Posterior vena cava (tissue), 2 donors: ENCODE measurements at regions of chr3 and their contacts with region 1.

Region 1: DNA sequence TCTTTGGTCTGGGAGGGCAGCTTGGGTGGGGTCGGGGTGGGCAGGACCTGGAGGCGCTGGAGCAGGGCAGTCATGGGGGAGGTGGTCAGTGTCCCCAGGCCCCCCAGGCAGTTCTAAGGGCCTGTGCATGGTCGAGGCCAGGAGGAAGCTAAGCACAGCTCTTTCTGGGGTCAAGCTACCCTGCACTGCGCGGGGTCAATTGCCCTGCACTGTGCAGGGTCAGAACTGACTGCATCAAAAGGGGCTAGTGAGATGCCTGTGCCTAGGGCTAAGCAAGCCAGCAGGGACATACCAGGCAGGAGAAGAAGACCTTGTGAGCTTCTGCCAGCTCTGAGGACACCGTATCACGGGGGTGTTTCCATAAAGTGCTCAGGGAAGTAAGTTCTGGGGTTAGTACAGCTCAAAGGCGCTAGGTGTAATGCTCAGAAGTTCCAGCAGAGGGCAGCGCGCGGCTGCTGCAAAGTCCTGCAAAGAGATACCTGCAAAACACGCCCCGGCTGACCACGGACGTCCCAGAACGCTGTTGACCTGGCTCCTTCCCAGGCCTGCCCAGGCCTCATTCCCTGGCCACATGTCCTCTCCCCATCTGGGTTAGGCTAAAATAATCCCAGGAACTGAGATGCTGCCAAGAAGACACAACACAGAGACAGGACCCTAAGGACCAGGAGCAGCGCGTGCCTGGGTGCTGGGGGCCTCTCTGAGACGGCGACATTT is 18.8 kb upstream of the IQSEC1 start:
- DNase-seq: peak; percentile 94

Region 2: DNA sequence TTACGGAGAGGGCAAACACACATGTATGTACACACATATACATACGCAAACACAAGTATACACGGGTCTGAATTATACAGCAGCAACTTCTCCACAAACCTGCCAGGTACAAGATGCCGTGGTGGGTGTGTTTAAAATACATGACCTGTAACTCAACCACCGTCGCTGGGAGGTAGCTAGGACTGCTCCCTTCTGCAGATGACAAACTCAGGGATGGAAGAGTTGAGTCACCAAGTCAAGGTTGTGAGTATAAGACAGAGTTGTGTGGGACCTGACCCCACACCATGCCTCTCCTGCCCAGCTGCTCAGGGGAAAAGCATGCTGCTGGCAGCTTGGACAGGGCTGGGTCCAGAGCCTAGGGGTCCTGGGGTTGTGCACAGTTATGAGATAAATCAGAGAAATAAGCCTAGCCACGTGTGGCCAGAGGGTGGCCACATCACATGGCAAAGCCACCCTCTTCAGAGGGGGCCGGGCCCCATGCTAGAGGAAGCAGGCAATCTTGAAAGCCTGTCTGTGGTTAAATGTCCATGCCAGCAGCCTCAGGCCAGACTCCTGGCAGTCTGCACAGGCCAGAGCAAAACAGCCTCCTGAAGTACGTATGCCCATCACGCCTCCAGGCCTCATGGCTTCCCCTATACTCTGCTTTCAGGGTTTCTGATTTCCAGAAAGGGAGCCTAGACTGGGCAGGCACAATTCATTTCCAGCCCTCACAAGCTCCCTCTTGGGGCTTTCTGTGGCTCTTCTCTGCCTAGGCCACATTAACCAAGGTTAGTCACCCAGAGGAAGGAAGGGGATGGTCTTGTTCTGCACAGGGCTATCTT is 143.0 kb before region 1 on chr3:
- intact Hi-C with region 1: no loop called
- DNase-seq: no peak

Region 3: DNA sequence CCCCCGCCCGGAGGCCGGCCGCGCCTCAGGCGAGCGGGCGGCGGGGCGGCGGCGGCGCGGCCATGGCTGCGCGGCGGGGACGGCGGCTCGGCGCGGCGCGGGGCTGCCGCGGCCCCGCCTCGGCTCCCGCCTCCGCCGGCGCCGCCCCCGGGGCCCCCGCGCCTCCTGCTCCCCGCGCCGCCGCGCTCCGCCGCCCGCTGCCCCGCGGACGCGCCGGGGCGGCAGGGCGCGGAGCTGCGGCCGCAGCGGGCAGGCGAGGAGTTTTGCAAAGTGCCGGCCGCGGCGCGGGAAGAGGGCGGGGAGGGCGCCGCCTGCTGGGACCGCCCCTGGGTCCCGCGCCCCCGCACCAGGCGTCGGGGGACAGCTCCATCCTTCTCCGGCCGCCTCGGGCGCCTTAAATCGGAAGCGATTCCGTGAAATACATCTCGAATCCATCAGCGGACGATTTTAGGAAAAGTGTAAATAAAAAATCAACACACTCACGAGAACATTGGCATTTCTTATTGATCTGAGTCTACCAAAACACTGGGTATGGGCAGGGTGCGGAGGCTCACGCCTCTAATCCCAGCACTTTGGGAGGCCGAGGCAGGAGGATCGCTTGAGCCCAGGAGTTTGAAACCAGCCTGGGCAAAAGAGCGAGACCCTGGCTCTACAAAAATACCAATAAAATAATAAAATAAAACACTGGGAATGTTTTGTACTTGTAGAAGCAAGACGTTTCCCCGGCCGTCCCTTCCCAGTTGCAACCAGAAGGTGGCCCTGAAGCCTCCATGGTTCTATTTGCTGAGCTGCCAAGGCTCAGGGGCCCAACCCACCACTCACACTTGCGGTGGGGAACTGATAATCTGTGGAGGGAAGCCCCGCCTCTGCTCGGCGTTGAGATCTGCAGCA is 191.2 kb after region 1 on chr3:
- intact Hi-C with region 1: loop called in 1 of 2 experiments (anchors 10 kb)
- DNase-seq: peak; percentile 76

Region 4: DNA sequence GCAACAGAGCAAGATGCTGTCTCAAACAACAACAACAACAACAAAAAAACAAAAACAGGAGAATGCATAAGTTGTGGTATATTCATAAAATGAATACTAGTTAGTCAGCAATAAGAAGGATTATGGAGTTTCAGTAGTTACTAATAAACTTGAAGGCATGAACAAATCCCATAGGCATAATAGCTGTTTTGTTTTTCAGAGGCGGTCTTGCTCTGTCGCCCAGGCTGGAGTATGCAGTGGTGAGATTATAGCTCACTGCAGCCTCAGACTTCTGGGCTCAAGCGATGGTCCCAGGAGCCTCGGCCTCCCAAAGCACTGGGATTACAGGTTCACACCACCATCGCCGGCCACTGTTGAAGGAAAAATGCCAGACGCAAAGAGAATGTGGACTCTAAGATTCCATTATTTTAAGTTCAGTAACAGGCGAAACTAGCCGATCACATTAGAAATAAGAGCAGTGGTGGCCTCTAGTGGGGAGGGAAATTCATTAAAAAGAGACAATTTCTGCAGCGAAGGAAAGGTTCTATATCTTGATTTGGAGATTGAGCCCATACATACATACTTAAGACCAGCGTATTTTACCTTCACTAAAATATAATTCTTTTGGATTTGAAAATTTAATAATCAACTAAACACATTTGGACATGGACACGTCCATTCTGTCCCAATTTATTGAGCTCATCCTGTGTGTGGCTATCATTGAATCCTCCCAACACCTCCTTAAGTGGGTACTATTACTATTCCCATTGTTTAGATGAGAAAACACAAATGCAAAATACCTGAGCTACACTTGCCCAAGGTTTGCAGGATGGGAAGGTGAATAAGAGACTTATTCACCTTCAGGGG is 360.7 kb after region 1 on chr3:
- intact Hi-C with region 1: loop called in 1 of 2 experiments (anchors 5 kb)
- DNase-seq: no peak

Region 5: GRCh38 chr3:13461169-13462158 is 369.4 kb after region 1 on chr3:
- intact Hi-C with region 1: loop called in 1 of 2 experiments (anchors 10 kb)
- DNase-seq: no peak

Region 6: DNA sequence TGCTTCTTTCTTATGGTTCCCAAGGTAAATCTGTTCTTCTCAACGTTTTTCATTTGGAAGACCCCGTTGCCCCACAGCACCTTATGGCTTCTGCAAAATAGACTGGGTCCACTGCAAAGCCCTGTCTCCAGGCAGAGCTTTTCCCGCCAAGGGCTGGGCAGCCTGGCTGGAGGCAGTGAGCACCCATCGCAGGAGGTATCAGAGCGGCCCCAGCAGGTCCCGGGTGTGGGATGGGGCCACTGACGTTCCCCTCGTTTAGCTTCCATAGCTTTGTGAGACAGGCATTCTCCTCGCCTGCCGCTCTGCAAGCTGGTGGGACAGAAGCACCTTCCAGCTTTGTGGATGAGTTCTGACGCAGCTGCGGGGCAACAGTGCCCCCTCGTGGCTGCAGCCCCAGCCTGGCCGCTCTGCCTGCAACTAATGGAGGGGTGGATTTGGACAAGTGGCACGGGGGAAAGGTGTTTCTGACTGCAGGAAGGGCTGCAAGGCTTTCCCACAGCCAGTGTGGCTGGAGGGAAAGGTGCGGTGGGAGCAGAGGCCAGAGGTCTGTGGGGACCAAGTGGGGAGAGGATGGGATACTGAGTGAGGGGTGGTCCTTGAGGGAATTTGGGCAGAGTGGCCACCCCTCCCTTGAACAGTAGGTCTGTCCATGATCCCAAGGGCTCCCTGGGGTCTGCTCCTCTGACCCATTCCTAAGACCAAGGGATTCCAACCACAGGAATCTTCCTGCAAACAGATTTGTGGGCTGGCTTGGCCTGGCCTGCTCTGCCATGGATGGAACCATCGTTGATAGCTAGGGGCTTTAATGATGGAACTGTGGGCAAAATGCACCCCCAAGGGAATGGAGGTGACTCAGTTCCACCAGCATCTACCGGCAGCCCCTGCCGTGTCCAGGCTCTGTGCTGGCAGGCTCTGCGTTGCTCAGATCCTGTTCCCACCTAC is 556.3 kb after region 1 on chr3:
- intact Hi-C with region 1: loop called (anchors 10 kb)
- DNase-seq: peak; percentile 95